Heart left ventricle (tissue), 16 donors: ENCODE measurements at regions of chr17 and their contacts with region 1.

Region 1: DNA sequence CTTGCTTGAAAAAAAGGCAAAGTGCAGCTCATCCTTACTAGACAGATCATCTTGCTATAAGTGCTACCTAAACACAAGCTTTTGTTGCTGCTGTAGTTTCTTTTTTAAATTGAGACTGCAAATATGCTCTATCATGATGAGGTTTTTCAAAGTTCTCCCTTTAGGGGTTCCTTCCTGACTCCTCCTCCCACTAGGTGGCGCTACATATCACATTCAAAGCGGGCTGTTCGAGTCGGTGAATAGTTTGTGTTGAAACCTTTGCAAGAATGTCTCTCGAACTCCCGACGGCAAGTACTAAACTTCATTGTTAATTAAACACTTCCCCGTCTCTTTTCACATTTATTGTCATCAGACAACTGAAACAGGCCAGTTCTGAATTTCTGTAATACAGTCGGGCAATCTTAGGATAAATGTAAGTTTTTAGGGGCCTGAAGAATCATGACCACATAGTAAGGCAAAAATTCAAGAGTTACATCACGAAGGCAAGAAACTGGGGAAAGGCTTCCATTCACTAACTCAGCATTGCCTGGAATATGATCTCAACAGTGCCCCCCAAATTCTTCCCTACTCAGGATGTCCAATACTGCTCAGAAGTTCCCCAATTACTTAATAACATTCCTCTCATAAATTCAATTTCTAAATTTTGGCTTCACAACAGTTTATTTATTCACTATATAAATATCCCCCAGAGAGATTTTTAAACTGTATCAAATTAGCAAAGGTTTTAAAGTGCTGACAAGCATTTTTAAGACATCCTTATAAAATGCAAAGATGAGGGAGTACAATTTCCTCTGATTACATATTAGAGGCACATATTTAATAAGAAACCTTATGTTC is 6.7 kb downstream of the HS3ST3A1 start:
- DNase-seq: peak; percentile 55 to 77 (median 74)
- ATAC-seq: peak in 3 of 4 donors; percentile 65 to 73 (median 71)
- H3K4me3 ChIP-seq: no peak overlapping the region
- H3K27ac ChIP-seq: no peak overlapping the region
- H3K4me1 ChIP-seq: peaks cover 0 to 20% (median 3%) of the 10 kb centered on the region in 12 donors
- H3K27me3 ChIP-seq: peaks cover 0 to 27% (median 3%) of the 10 kb centered on the region in 9 donors
- CTCF ChIP-seq: peak; percentile 80 to 94 (median 87)
- POLR2A ChIP-seq: no peak

Region 2: DNA sequence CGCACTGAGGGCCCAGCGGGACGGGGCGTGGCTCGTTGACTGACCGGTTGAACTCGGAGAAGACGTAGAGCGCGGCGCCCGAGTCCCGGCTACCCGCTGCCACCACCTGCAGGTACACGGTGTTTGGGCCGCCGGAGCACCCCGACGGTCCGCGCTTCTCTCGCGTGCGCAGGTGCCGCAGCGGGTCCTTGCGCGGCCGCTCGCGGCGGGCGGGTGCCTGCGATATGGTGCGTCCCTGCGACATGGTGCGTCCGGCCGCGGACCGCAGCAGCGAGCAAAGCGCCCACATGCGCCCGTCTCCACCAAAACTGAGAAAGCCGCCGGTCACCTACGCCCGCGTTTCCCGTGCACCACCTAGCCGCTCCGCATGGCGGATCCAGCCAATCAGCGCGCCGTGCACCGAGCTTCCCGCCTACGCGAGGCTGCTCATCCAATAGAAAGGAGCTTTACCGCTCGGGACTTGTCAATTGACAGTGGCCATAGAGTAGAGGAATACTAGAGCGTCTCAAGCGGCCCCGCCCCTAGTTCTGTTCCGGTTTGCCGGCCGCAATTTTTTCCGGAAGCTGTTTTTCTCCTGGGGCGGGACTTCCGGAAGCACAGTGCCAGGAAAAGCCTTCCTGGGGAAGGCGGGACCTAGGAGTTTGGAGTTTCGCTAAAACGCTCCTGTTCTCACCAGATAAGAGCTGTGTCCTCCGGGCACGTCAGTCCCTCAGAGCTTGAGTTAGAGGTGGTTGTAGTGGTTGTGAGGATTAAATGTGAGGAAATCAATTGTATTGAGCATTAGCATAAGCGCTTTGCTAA is 577.1 kb before region 1 on chr17 and contains the start of gene ELAC2:
- intact Hi-C with region 1: no loop called
- DNase-seq: peak; percentile 97 to 98 (median 98)
- ATAC-seq: peak; percentile 99 to 100 (median 99)
- H3K4me3 ChIP-seq: peak within 1 kb of the TSS; percentile 54 to 97 (median 86)
- H3K27ac ChIP-seq: peak within 1 kb of the TSS; percentile 56 to 95 (median 84)
- H3K4me1 ChIP-seq: peaks cover 0 to 22% (median 11%) of the 10 kb centered on the region in 12 donors
- H3K27me3 ChIP-seq: no peaks in the 10 kb centered on the region
- CTCF ChIP-seq: peak in 2 of 12 donors; percentile 8 to 13
- POLR2A ChIP-seq: peak in 1 of 2 donors; percentile 56
- total RNA-seq, gene ELAC2: 48.6 to 114 (median 68.3) TPM

Region 3: DNA sequence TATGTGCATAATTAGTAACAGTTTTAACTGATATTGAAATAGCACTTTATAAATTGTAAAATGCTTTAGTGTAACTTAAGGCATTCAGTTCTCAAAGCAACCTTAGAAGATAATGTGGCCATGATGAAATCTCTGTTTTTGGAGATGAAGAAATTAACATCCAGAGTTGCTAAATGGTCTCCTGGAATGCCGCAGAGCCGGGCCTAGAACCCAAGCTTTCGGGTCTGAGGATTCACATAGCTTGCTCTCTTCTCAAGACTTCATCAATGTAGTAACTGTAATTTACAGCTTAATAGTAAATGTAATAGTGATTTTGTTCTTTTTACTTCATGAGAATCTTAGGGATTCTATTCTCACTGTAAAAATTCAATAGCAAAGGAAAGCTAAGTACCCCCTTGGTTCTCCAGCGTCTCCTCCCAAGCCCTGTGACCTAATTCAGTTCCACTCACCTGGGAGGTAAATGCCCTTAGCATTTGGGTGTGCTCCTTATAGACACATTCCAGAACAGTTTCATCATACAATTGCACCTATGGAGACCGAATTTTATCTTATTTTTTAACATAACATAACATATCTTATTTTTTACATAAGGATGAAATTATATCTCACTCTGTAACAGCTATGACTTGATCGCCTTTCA is 265.4 kb before region 1 on chr17:
- intact Hi-C with region 1: loop called in 4 of 10 experiments (anchors 5 to 10 kb)
- DNase-seq: no peak
- ATAC-seq: no peak
- H3K4me3 ChIP-seq: no peak overlapping the region
- H3K27ac ChIP-seq: no peak overlapping the region
- H3K4me1 ChIP-seq: no peaks in the 10 kb centered on the region
- H3K27me3 ChIP-seq: no peaks in the 10 kb centered on the region
- CTCF ChIP-seq: no peak
- POLR2A ChIP-seq: no peak

Region 4: DNA sequence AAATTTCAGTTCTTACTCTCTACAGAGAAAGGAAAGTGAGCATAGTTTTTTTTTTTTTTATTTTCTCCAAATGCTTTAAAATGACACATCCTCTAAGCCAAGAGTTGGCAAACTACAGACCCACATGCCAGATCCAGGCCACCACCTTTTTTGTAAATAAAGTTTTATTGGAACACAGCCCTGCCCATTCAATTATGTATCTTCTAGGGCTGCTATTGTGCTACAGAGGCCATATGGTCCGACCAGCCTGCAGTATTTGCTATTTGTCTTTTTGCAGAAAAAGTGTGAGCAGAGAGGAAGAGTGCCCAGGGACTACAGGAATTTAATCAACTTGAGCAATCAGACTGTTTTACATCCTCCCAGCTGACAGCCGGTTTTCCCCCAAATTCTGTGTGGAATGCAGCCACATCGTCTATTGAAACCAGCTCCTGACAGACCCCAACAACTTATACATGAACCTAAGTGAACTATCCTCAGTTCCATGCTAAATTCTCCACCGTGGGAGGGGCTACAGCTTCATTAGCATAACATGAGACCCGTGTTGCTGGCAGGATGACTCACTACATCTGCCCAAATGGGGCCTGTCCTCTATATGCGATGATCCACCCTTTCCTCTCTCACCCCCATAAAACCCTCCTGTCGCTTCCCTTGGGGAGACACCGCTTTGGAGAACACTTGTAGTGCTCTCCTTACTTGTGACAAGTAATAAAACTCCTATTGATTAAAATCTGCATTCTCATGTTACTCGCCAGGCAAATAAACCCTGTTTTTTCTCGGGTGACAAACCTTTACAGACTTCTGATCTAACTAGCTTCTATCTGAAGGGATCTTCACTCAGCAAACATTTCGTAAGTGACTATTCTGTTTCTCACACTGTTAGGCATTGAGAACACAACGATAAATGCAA is 156.1 kb after region 1 on chr17:
- intact Hi-C with region 1: no loop called
- DNase-seq: no peak
- ATAC-seq: no peak
- H3K4me3 ChIP-seq: no peak overlapping the region
- H3K27ac ChIP-seq: no peak overlapping the region
- H3K4me1 ChIP-seq: no peaks in the 10 kb centered on the region
- H3K27me3 ChIP-seq: peaks cover 0 to 3% (median 0%) of the 10 kb centered on the region in 9 donors
- CTCF ChIP-seq: no peak
- POLR2A ChIP-seq: no peak

Region 5: DNA sequence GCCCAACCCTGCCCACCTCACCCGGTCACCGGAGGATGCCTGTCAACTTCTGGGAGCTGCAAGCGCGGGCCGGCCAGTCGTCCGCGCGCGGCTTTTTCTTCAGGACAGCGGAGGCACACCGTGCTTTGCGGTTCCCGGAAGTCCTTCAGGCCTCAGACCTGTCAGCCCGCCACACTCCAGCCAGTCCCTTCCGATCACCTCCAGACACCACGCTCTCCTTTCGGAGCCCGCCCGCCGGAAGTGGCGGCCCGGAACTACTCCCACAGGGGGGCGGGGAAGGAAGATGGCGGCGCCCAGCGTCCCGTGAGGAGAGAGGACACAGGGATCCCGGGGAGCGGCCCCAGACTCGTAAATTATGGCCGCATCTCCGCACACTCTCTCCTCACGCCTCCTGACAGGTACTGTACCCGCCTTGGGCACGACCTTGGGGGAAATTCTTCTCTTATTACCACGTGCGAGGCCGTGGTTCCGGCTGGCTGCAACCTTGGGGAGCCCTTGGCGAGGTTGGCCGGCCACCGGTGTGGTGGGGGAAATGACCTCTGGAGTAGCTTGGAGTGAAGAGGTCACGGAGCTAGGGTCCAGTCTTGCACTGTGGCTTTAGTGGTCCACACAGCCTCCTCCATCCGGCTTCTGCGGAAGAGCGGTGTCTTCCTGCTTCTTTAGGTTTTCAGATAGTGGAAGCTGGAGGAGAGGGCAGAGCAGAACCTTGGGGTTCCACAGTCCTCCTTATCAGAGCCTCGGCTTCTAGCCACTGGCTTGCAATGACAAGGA is 474.5 kb after region 1 on chr17 and contains the start of gene COX10:
- intact Hi-C with region 1: loop called in 2 of 10 experiments (anchors 10 kb)
- DNase-seq: peak; percentile 88 to 93 (median 91)
- ATAC-seq: peak; percentile 97 to 100 (median 99)
- H3K4me3 ChIP-seq: peak within 1 kb of the TSS; percentile 82 to 99 (median 94)
- H3K27ac ChIP-seq: peak within 1 kb of the TSS; percentile 84 to 96 (median 89)
- H3K4me1 ChIP-seq: peaks cover 0 to 39% (median 23%) of the 10 kb centered on the region in 12 donors
- H3K27me3 ChIP-seq: no peaks in the 10 kb centered on the region
- CTCF ChIP-seq: peak in 2 of 12 donors; percentile 5 to 15
- POLR2A ChIP-seq: peak in 1 of 2 donors; percentile 70
- total RNA-seq, gene COX10: 36.6 to 96.0 (median 55.4) TPM

Region 6: GRCh38 chr17:14926526-14927122 is 1331.6 kb after region 1 on chr17:
- intact Hi-C with region 1: loop called in 9 of 10 experiments (anchors 2 to 10 kb)
- DNase-seq: peak in 3 of 5 donors; percentile 34 to 41 (median 35)
- ATAC-seq: no peak
- H3K4me3 ChIP-seq: no peak overlapping the region
- H3K27ac ChIP-seq: no peak overlapping the region
- H3K4me1 ChIP-seq: no peaks in the 10 kb centered on the region
- H3K27me3 ChIP-seq: peaks cover 0 to 16% (median 0%) of the 10 kb centered on the region in 9 donors
- CTCF ChIP-seq: peak; percentile 64 to 86 (median 76)
- POLR2A ChIP-seq: no peak

Region 7: DNA sequence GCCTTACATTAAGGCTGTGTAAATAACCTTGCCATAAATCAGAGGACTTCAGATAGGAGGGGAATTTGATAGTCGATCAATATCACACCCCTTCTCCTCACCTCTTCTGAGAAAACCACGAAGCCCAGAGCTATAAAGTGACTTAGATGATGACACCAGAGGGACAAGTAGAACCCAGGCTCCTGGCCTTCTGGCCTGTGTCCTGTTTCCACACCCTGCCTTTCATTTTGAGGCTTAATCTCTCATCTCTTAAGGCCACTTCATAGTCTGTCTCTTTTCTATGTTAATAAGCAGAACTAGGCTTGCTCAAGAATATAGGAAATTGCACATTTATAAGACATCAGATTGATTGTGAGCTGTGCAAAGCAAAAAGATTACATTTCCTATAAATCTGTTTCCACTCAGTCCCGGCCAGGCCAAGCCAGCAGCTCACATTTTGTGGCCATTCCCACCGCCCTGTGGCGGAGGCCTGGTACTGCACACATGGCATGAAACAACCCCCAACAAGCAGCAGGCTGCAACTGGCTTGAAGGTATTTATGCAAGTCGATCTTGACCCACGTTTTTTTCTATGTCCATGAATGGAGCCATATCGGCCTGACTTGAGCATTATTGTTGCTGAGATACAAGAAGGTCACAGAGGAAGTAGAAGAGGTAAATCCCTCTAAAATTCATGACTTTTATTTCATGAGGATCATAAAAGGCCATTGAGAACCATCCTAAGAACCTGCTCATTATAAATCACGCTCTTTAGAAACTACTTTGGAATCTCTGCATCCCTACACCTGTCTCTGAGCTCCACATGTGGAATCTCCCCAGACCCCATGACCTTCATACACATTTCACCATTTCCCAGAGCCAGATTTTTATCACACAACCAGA is 1576.4 kb after region 1 on chr17:
- intact Hi-C with region 1: loop called in 2 of 10 experiments (anchors 5 to 10 kb)
- DNase-seq: peak; percentile 50 to 81 (median 68)
- ATAC-seq: peak; percentile 78 to 92 (median 88)
- H3K4me3 ChIP-seq: no peak overlapping the region
- H3K27ac ChIP-seq: no peak overlapping the region
- H3K4me1 ChIP-seq: peaks cover 0 to 4% (median 0%) of the 10 kb centered on the region in 12 donors
- H3K27me3 ChIP-seq: no peaks in the 10 kb centered on the region
- CTCF ChIP-seq: peak; percentile 63 to 87 (median 75)
- POLR2A ChIP-seq: no peak